Activated CD8-positive, alpha-beta T cell treated with anti-CD3 and anti-CD28 coated beads for 36 hours (primary cell): ENCODE measurements at regions of chr1 and their contacts with region 1.

Region 1: DNA sequence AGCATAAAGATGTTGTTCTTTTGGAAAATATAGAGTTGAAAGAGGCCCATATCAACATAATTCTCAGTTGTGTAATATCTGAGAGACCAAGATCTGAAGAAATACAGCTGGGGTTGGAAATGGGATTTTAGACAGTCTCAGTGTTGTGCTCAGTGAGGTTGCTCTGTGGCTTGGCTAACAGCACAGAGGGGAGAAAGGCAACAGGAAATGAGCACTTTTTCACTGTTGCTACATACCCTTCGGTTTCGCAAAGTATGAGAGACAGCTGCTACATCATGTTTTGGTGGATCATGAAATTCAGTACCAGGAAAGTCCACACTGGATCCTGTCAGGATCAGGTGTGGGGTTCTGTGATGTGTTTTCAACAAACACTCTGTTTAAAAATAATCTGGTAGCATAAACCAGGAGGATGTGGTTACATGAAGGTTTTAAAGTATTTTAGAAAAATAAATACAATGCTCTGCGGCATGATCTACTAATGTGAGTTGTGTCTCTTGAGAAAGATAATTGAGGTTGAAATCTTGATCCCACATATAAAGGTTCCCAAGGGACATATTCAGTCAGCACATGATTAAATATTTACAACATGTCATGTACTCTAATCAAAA is 7.0 kb upstream of the GPR88 start:
- DNase-seq: peak; percentile 55
- ATAC-seq: peak; percentile 95
- H3K4me3 Mint-ChIP-seq: no peak overlapping the region
- H3K27ac Mint-ChIP-seq: peak overlapping the region; percentile 62
- H3K4me1 Mint-ChIP-seq: peaks cover 33% of the 10 kb centered on the region
- H3K27me3 Mint-ChIP-seq: peaks cover 2% of the 10 kb centered on the region
- CTCF ChIP-seq: no peak

Region 2: DNA sequence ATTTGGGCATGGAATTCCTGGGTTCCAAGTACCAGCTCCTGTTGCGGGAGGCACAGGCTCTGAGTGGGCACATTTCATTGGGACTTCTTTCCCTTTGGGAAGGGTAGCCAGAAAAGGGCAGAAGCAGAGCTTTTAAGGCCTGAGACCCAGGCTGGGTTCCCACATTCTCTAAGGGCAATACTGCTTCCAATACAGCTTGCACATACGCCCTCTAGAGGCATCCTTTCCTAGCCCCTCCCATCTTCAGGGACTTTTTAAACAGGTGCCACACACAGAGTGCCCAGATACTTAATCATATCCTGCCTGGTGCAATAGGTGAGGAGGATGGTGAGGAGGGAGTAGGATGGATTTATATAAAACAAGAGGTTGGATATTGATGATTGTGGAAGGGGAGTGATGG is 12.7 kb after region 1 on chr1:
- CTCF ChIA-PET with region 1: interaction called, 24 read pairs
- POLR2A ChIA-PET with region 1: no interaction called
- intact Hi-C with region 1: no loop called
- DNase-seq: peak; percentile 74
- ATAC-seq: peak; percentile 83
- H3K4me3 Mint-ChIP-seq: no peak overlapping the region
- H3K27ac Mint-ChIP-seq: no peak overlapping the region
- H3K4me1 Mint-ChIP-seq: peaks cover 6% of the 10 kb centered on the region
- H3K27me3 Mint-ChIP-seq: peaks cover 32% of the 10 kb centered on the region
- CTCF ChIP-seq: peak; percentile 60